ENCODE measurements at regions of chr12 and their contacts with region 1.

Region 1: DNA sequence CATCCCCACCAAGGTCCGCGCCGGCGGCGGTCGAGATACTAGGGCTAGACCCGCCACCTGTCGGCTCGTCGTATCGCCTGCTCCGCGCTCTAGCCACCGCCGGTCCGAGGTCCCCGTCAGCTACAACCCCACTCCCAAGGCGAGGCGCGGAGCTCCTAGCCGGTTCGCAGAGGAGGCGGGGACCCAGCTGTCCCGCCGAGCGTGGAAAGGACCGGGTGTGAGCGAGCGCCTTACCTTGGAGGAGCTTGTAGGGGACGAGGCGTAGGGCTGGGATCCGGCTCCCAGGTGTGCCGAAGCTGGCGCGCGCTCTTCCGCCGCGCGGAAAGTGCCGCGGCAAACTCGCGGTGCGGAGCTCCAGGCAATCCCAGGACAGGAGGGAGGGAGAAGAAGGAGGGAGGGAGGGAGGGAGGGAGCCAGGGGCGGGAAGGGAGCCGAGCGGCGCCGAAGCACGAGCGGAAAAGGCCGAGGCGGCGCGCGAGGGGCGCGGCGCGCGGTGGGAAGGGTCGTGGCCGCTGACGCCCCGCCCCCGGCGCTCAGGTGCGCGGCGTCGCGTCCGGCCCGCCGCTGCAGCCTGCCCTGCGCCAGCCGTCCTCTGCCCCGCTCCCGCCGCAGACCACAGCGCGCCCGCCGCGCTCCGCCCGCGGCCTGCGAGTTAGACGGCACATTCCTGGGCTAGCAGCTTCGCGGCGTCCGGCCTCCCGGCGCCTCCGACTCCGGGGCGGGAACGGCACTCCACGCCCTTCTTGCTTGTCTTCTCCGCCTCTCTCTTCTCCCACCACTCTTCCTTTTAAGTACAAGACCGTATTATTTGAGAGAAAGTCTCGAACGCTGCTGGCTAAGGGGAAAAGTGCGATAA is at the start of gene PAWR:
- DNase-seq: peak; percentile 32
- H3K4me3 Mint-ChIP-seq: peak within 1 kb of the TSS; percentile 72
- H3K27ac Mint-ChIP-seq: no peak within 1 kb of the TSS
- H3K4me1 Mint-ChIP-seq: peaks cover 7% of the 10 kb centered on the region
- H3K27me3 Mint-ChIP-seq: peaks cover 46% of the 10 kb centered on the region
- total RNA-seq, gene PAWR: 5.2 to 5.6 TPM

Region 2: DNA sequence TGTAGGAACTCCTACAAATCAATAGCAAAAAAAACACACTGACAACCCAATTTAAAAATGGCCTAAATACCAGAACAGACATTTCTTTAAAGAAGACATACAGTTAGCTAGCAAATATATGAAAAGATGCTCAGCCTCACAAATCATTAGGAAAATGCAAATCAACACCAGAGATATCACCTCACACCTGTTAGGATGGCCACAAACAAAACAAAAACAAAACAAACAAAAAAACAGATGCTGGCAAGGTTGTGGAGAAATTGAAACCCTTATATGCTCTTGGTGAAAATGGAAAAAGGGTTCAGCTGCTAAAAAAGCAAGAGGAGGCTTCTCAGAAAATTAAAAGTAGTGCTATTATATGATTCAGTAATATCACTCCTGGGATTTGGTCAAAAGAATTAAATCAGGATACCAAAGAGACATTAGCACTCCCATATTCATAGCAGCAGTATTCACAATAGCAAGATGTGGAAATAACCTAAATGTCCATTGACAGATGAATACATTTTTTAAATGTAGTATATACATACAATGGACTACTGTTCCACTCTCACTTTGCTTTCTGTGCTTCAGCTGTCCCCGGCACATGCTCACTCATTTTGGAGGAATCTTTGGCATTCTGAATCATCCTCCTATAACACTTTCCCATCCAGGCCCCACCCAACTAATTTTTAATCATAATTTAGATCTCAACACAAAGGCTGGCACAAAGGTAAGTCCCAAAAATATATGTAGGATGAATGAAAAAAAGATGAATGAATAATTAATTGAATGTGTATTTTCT is 727.2 kb before region 1 on chr12:
- CTCF ChIA-PET with region 1: no interaction called
- intact Hi-C with region 1: no loop called
- DNase-seq: no peak
- H3K4me3 Mint-ChIP-seq: no peak overlapping the region
- H3K27ac Mint-ChIP-seq: no peak overlapping the region
- H3K4me1 Mint-ChIP-seq: no peaks in the 10 kb centered on the region
- H3K27me3 Mint-ChIP-seq: no peaks in the 10 kb centered on the region

Region 3: GRCh38 chr12:79547735-79548609 is 142.9 kb before region 1 on chr12:
- CTCF ChIA-PET with region 1: no interaction called
- intact Hi-C with region 1: loop called (anchors 2 kb)
- DNase-seq: peak; percentile 45
- H3K4me3 Mint-ChIP-seq: no peak overlapping the region
- H3K27ac Mint-ChIP-seq: no peak overlapping the region
- H3K4me1 Mint-ChIP-seq: no peaks in the 10 kb centered on the region
- H3K27me3 Mint-ChIP-seq: no peaks in the 10 kb centered on the region

Region 4: DNA sequence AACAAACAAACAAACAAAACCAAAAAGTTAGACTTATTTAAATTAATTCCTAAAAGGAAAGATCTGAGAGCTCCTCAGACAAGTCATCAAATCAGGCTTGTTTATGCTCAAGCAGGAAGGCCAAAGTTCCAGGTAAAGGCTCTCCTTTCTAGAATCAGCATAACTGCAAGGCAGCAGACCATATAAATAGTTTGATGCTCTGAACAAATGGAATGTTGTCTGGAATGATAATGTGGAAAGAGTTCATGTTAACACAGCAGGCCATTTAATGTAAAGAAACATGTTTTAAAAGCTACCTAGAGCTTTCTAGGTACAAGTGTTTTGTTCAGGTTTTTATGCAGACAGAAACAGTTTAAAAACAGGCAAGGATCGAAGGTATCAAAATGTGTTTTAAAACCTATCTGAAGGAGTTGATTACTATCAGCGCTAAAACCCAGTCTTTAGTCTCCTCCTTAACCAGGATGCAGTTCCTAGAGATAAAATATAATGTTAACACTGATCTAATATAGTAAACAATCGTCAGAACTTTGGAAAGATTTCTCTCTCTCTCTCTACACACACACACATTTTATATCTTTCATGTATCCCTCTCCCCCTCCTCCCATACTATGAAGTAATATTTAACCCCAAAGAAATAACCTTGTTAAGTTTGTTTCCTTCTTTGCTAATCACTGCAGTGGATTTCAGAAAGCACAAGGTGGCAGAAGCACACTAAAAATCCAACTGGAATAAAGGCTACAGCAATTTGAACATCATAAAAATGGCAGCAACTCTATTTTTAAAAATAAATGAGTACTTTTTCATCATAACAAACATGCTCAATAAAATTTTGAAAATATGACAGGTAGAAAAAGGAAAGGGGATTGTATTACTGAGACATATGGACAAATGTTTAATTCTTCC is 135.6 kb before region 1 on chr12:
- CTCF ChIA-PET with region 1: no interaction called
- intact Hi-C with region 1: loop called (anchors 2 kb)
- DNase-seq: peak; percentile 11
- H3K4me3 Mint-ChIP-seq: no peak overlapping the region
- H3K27ac Mint-ChIP-seq: no peak overlapping the region
- H3K4me1 Mint-ChIP-seq: no peaks in the 10 kb centered on the region
- H3K27me3 Mint-ChIP-seq: no peaks in the 10 kb centered on the region

Region 5: GRCh38 chr12:79597910-79598309 is 93.0 kb before region 1 on chr12:
- CTCF ChIA-PET with region 1: no interaction called
- intact Hi-C with region 1: no loop called
- DNase-seq: no peak
- H3K4me3 Mint-ChIP-seq: no peak overlapping the region
- H3K27ac Mint-ChIP-seq: no peak overlapping the region
- H3K4me1 Mint-ChIP-seq: no peaks in the 10 kb centered on the region
- H3K27me3 Mint-ChIP-seq: peaks cover 4% of the 10 kb centered on the region

Region 6: GRCh38 chr12:79858518-79858917 is 167.7 kb after region 1 on chr12:
- CTCF ChIA-PET with region 1: no interaction called
- intact Hi-C with region 1: no loop called
- DNase-seq: no peak
- H3K4me3 Mint-ChIP-seq: no peak overlapping the region
- H3K27ac Mint-ChIP-seq: no peak overlapping the region
- H3K4me1 Mint-ChIP-seq: peaks cover 13% of the 10 kb centered on the region
- H3K27me3 Mint-ChIP-seq: no peaks in the 10 kb centered on the region

Region 7: DNA sequence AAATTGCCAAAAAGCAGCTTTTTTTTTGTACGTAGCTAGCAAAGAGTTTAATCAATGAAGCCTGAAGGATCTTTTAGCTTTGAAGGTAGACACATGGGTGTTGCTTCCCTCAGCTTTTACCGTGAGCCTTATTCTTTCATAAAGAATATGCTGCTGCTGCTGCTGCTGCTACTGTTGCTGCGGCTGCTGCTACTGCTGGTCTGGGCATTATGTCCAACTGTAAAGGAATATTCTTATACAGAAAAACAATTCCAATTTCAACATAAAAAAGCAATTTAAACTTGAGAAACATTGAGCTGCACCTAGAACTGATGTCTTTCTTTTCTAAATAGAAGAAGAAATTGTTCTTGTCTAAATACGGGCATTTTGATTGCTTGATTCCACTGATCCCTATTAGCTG is 282.9 kb after region 1 on chr12:
- CTCF ChIA-PET with region 1: no interaction called
- intact Hi-C with region 1: no loop called
- DNase-seq: no peak
- H3K4me3 Mint-ChIP-seq: no peak overlapping the region
- H3K27ac Mint-ChIP-seq: no peak overlapping the region
- H3K4me1 Mint-ChIP-seq: no peaks in the 10 kb centered on the region
- H3K27me3 Mint-ChIP-seq: peaks cover 3% of the 10 kb centered on the region

Measured in activated naive CD4-positive, alpha-beta T cell treated with anti-CD3 and anti-CD28 coated beads for 36 hours (primary cell).